PC-3 (cell line): ENCODE measurements at regions of chr7 and their contacts with region 1.

Region 1: GRCh38 chr7:23431702-23432199 is 38.5 kb downstream of the IGF2BP3 start:
- DNase-seq: no peak
- ATAC-seq: no peak
- H3K4me3 ChIP-seq: no peak overlapping the region
- H3K27ac ChIP-seq: no peak overlapping the region
- H3K4me1 ChIP-seq: 0 out of 2 replicates have a peak, but pooled peaks cover 5% of the 10 kb centered on the region
- H3K27me3 ChIP-seq: no peaks in the 10 kb centered on the region
- CTCF ChIP-seq: no peak

Region 2: GRCh38 chr7:23462846-23463245 is 31.1 kb after region 1 on chr7:
- CTCF ChIA-PET with region 1: interaction called, 5 read pairs
- POLR2A ChIA-PET with region 1: no interaction called
- intact Hi-C with region 1: loop called (anchors 1 kb)
- DNase-seq: peak; percentile 61
- ATAC-seq: peak; percentile 71
- H3K4me3 ChIP-seq: no peak overlapping the region
- H3K27ac ChIP-seq: no peak overlapping the region
- H3K4me1 ChIP-seq: peaks cover 40% of the 10 kb centered on the region
- H3K27me3 ChIP-seq: no peaks in the 10 kb centered on the region
- CTCF ChIP-seq: peak; percentile 63

Region 3: DNA sequence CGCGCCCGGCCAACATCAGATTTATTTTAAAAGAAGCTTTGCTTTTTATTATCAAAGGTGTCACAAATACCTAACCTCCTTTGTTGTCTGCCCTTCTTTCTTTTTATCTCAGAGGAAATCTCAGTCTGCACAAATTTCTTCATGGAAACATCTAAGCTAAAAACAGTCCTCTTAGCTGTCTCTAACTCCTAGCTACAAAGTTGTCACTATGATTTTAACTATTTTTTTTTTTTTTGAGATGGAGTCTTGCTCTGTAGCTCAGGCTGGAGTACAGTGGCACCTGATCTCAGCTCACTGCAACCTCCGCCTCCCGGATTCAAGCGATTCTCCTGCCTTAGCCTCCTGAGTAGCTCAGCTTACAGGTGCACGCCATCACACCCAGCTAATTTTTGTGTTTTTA is 92.7 kb after region 1 on chr7:
- CTCF ChIA-PET with region 1: no interaction called
- POLR2A ChIA-PET with region 1: interaction called, 16 read pairs
- intact Hi-C with region 1: no loop called
- DNase-seq: no peak
- ATAC-seq: no peak
- H3K4me3 ChIP-seq: no peak overlapping the region
- H3K27ac ChIP-seq: no peak overlapping the region
- H3K4me1 ChIP-seq: peaks cover 18% of the 10 kb centered on the region
- H3K27me3 ChIP-seq: no peaks in the 10 kb centered on the region
- CTCF ChIP-seq: no peak

Region 4: GRCh38 chr7:23546897-23547572 is 115.3 kb after region 1 on chr7:
- CTCF ChIA-PET with region 1: interaction called, 4 read pairs
- POLR2A ChIA-PET with region 1: no interaction called
- intact Hi-C with region 1: loop called (anchors 1 kb)
- DNase-seq: peak; percentile 94
- ATAC-seq: peak; percentile 81
- H3K4me3 ChIP-seq: no peak overlapping the region
- H3K27ac ChIP-seq: no peak overlapping the region
- H3K4me1 ChIP-seq: no peaks in the 10 kb centered on the region
- H3K27me3 ChIP-seq: no peaks in the 10 kb centered on the region
- CTCF ChIP-seq: peak; percentile 92